K562 (cell line): ENCODE measurements at regions of chr11 and their contacts with region 1.

Region 1: DNA sequence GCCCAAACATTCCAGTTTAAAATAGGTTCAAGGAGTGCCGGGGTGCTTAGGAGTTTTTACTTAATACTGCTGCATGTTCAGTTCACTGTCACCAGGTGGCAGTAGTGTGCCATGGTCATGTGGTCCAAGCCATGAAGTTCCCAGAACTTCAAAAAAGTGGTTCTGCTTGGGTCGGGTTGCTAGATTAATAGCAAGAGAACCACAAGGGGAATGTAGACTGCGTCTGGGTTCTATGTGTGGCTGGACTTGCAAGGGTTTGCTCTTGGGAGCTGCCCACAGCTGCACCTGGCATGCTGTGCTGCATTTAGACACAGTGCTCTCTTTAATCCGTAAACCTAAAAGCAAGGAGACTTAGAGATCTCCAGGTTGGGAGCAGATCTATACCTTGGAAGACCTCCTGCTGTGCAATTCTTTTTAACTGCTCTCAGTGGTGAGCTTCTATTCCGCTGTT is 6.5 kb upstream of the SPON1 start:
- DNase-seq: peak; percentile 40 to 77 (median 64)
- ATAC-seq: peak; percentile 76
- H3K4me3 ChIP-seq: no peak overlapping the region
- H3K27ac ChIP-seq: no peak overlapping the region
- H3K4me1 ChIP-seq: no peaks in the 10 kb centered on the region
- H3K27me3 ChIP-seq: peaks cover 11 to 29% of the 10 kb centered on the region in 2 experiments; a peak in 3 of 5 replicates
- CTCF ChIP-seq: peak; percentile 72 to 86 (median 78)
- EP300 ChIP-seq: no peak
- POLR2A ChIP-seq: no peak
- RAD21 ChIP-seq: peak; percentile 79 to 86

Region 2: DNA sequence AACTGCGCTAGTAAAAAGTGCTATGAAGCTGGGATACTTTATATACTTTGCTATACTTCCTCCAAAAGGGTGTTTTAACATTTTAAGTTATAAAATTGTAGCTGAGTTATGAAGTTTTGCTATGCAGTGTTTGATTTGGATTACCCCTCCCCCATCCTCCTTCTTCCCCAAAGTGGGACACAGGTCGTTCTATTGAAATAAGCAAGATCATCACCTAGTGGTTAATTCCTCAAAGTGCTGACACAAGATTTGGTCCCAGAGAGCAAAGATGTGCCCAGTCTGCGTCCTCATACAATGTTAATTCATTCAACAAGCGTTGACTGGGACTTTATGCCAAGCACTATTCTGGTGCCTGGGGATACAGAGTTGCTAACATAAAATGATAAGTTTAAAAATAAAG is 85.0 kb after region 1 on chr11:
- CTCF ChIA-PET with region 1: interaction called, 3 read pairs
- POLR2A ChIA-PET with region 1: no interaction called
- in situ Hi-C with region 1: no loop called
- intact Hi-C with region 1: loop called (anchors 2 kb)
- DNase-seq: peak; percentile 8 to 36 (median 28)
- ATAC-seq: peak; percentile 42; the same call in 1 of the 3 replicates
- H3K4me3 ChIP-seq: no peak overlapping the region
- H3K27ac ChIP-seq: no peak overlapping the region
- H3K4me1 ChIP-seq: no peaks in the 10 kb centered on the region
- H3K27me3 ChIP-seq: no peaks in the 10 kb centered on the region
- CTCF ChIP-seq: peak; percentile 38 to 58 (median 41); a peak in 3 of 6 replicates
- EP300 ChIP-seq: no peak
- POLR2A ChIP-seq: no peak
- RAD21 ChIP-seq: peak; percentile 28 to 57; a peak in 3 of 4 replicates

Region 3: DNA sequence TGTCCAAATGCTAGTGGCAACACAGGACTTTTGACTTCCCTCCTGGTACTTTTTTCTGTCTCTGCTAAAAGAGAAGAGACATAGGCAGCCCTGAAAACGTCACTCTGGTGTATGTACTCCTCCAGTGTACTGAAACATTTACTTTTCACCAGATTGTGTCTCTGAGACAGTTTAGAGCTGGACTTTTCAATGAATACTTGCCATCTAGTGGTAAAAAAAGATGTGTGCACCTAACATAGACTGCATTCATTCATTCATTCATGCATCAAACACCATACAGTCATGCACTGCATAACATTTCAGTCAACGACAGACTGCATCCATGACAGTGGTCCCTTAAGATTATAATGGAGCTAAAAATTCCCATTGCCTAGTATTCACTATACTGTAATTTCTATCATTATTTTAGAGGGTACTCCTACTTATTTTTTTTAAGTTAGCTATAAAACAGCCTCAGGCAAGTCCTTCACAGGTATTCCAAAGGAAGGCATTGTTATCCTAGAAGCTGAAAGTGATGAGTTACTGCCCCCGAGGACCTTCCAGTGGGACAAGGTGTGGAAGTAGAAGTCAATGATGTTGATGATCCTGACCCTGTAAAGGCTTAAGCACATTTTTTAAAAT is 192.8 kb after region 1 on chr11:
- CTCF ChIA-PET with region 1: interaction called, 4 read pairs
- POLR2A ChIA-PET with region 1: no interaction called
- in situ Hi-C with region 1: no loop called
- intact Hi-C with region 1: loop called (anchors 5 kb)
- DNase-seq: peak in 3 of 4 experiments; percentile 10 to 16 (median 14)
- ATAC-seq: peak; percentile 87
- H3K4me3 ChIP-seq: no peak overlapping the region
- H3K27ac ChIP-seq: no peak overlapping the region
- H3K4me1 ChIP-seq: no peaks in the 10 kb centered on the region
- H3K27me3 ChIP-seq: no peaks in the 10 kb centered on the region
- CTCF ChIP-seq: peak; percentile 33 to 59 (median 51); a peak in 4 of 6 replicates
- EP300 ChIP-seq: no peak
- POLR2A ChIP-seq: no peak
- RAD21 ChIP-seq: peak; percentile 54 to 69

Region 4: DNA sequence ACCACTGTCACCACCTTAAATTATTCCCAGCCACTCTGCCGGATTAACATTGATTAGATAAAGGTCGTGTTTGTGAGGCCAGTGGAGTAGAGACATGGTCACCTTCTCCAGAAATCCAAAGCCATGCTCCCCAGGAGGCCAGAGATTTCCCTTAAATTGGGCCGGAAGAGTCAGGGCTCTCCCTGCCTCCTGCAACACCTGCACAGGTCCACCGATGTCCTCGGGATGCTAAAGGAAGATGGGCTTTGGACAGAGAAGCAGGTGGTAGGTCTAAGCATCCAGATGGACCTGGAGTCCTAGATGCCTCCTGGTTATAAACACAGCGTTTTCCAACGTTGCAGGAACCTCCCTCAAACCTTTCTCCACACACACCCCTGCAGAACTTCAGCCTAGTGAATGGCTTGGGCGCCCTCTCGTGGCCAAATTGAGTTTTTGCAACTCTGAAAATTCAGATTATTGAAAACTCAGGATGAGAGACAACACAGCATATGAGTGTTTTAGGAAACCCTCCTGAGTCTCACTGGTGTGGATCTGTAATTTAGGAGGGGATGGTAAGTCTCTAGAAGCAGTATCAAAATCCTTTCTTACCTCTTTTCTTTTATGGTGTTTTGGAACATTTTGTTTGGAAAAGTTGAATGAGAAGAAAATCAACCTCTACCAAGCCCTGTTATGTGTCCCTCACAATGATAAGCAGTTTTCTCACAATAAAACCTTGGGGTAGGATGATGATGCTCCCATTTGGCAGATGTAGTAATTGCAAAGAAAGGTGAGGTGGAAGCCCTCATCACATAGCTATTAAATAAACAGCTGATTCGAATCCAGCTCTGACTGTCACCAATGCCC is 293.3 kb after region 1 on chr11:
- CTCF ChIA-PET with region 1: interaction called, 14 read pairs
- POLR2A ChIA-PET with region 1: interaction called, 3 read pairs
- in situ Hi-C with region 1: loop called (anchors 10 kb)
- intact Hi-C with region 1: loop called (anchors 1 kb)
- DNase-seq: peak; percentile 62 to 68 (median 64)
- ATAC-seq: peak; percentile 83
- H3K4me3 ChIP-seq: no peak overlapping the region
- H3K27ac ChIP-seq: no peak overlapping the region
- H3K4me1 ChIP-seq: no peaks in the 10 kb centered on the region
- H3K27me3 ChIP-seq: peaks cover 11 to 54% of the 10 kb centered on the region in 2 experiments; a peak in 3 of 5 replicates
- CTCF ChIP-seq: peak; percentile 80 to 92 (median 80)
- EP300 ChIP-seq: no peak
- POLR2A ChIP-seq: no peak
- RAD21 ChIP-seq: peak; percentile 90 to 92